HEK293T (cell line): ENCODE measurements at regions of chr1 and their contacts with region 1.

Region 1: DNA sequence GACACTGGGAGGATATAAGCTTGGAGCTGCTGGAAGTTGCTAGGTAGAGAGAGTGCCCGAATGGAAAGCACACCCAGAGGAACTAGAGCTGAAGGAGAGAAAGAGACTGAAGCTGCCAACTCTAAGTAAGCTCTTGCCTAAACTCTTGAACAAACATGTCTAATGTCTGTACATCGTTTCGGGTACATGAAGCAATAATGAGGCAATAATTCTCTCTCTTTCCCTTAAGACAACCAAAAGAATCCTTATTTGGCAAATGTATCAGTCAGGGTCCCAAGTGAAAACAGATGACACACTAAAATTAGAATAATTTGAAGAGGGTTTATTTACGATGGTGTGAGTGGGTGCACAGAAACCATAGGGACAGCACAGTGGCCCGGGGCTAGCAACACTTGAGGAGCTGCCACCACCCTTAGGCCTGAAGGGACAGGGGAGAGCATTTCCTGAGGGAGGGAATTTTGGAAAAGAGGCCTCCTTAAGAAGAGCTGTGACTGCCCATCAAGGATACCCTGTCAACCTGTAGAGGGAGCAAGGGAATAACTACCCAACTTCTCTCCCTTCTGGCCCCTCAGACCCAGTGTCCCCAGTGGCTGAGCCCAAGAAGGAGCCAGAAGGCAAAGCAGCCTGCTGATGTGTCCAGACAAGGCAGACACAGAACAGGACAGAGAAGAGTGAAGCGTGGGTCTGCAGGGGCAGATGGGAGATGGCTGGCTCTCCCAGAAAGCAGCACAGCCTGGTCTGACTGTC is 36.1 kb upstream of the KHDRBS1 start:
- DNase-seq: peak; percentile 82

Region 2: DNA sequence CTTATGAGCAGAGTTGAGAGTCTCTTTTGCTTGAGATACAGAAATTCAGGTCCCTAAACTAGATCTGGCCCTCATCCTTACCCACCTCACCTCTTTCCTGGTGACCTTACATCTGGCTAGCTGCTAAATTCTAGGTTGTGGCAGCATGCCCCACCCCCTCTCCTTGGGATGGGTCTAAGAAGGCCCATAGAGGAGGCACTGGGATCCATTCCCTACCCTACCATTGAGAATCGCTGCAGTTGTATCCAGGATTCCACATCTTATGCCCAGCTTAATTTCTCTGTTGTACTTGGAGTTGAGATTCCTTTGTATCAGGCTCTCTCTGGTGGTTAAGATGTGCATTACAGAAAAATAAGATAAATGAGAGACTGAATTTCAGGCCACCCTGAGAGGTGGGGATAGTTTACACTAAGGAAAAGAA is 85.7 kb after region 1 on chr1:
- CTCF ChIA-PET with region 1: interaction called, 10 read pairs
- POLR2A ChIA-PET with region 1: no interaction called
- DNase-seq: peak; percentile 76